CD4-positive, alpha-beta memory T cell (primary cell): ENCODE measurements at regions of chr4 and their contacts with region 1.

Region 1: GRCh38 chr4:67393699-67394281 is 151.5 kb downstream of the CENPC start:
- DNase-seq: peak in 4 of 5 donors; percentile 13 to 20 (median 17)
- H3K4me3 ChIP-seq: no peak overlapping the region
- H3K4me3 Mint-ChIP-seq: no peak overlapping the region
- H3K27ac ChIP-seq: no peak overlapping the region
- H3K27ac Mint-ChIP-seq: no peak overlapping the region
- H3K4me1 ChIP-seq: no peaks in the 10 kb centered on the region
- H3K4me1 Mint-ChIP-seq: no peaks in the 10 kb centered on the region
- H3K27me3 ChIP-seq: peaks cover 3% of the 10 kb centered on the region
- H3K27me3 Mint-ChIP-seq: peaks cover 0 to 2% of the 10 kb centered on the region in 2 donors

Region 2: GRCh38 chr4:67087897-67088296 is 305.9 kb before region 1 on chr4:
- CTCF ChIA-PET with region 1: interaction called, 4 read pairs
- POLR2A ChIA-PET with region 1: no interaction called
- intact Hi-C with region 1: loop called (anchors 5 kb)
- DNase-seq: peak in 4 of 5 donors; percentile 2 to 8 (median 4)
- H3K4me3 ChIP-seq: no peak overlapping the region
- H3K4me3 Mint-ChIP-seq: no peak overlapping the region
- H3K27ac ChIP-seq: no peak overlapping the region
- H3K27ac Mint-ChIP-seq: no peak overlapping the region
- H3K4me1 ChIP-seq: no peaks in the 10 kb centered on the region
- H3K4me1 Mint-ChIP-seq: no peaks in the 10 kb centered on the region
- H3K27me3 ChIP-seq: no peaks in the 10 kb centered on the region
- H3K27me3 Mint-ChIP-seq: no peaks in the 10 kb centered on the region

Region 3: DNA sequence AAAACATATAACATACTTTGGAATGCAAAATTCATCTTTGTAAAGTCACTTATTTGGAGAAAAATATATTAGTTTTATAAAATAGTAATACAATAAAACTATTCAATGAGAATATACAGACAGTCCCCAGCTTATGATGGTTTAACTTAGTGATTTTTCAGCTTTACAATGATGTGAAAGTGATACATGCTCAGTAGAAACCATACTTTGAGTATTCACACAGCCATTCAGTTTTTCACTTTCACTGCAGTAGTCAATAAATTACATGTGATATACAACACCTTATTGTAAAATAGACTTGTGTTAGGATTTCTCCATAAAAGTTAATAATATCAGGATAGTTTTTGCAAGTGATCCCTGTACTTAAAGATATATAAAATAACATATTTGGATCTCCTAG is 284.5 kb before region 1 on chr4:
- CTCF ChIA-PET with region 1: no interaction called
- POLR2A ChIA-PET with region 1: no interaction called
- intact Hi-C with region 1: no loop called
- DNase-seq: no peak
- H3K4me3 ChIP-seq: no peak overlapping the region
- H3K4me3 Mint-ChIP-seq: no peak overlapping the region
- H3K27ac ChIP-seq: no peak overlapping the region
- H3K27ac Mint-ChIP-seq: no peak overlapping the region
- H3K4me1 ChIP-seq: no peaks in the 10 kb centered on the region
- H3K4me1 Mint-ChIP-seq: no peaks in the 10 kb centered on the region
- H3K27me3 ChIP-seq: no peaks in the 10 kb centered on the region
- H3K27me3 Mint-ChIP-seq: peaks cover 0 to 1% of the 10 kb centered on the region in 2 donors

Region 4: GRCh38 chr4:67603310-67604028 is 209.7 kb after region 1 on chr4:
- CTCF ChIA-PET with region 1: no interaction called
- POLR2A ChIA-PET with region 1: no interaction called
- intact Hi-C with region 1: no loop called
- DNase-seq: no peak
- H3K4me3 ChIP-seq: no peak overlapping the region
- H3K4me3 Mint-ChIP-seq: no peak overlapping the region
- H3K27ac ChIP-seq: no peak overlapping the region
- H3K27ac Mint-ChIP-seq: no peak overlapping the region
- H3K4me1 ChIP-seq: no peaks in the 10 kb centered on the region
- H3K4me1 Mint-ChIP-seq: peaks cover 3 to 5% (median 5%) of the 10 kb centered on the region in 4 donors
- H3K27me3 ChIP-seq: no peaks in the 10 kb centered on the region
- H3K27me3 Mint-ChIP-seq: no peaks in the 10 kb centered on the region